ENCODE measurements at regions of chr9 and their contacts with region 1.

Region 1: DNA sequence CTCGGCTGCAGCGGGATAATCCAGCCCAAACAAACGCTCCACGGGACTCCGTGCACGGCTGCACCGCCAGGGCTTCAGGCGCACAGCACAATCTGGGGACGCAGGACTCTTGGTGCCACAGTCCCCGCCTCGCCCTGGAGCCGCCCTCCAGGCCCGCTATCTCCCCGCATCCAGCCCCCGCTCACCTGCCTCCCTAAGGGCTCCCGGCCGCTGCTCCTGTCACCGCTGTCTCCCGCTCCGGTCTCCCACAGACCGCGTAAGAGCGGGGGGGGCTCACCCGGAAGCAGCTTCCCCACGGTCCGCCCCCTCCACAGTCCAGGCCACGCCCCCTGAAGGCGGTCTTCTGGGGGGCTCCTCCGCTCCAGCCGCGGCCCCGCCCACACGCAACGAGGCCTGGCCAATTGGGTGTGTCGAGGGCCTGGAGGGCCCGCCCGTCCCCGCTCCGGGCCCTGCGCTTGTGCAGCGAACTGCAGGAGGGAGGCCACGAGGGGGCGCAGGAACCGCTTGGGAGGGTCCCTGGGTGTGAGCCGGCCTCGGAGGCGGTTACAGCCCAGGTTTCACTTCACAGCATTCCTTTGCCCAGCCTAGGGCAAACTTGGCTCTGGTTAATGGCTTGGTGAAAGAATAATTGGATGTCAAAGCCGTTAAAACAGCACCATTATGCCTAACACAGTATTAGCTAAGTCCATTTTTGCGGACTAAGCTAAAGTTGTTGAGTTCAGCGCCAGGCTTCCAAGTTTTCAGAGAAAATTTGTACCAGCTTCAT is at the start of gene ALAD:
- DNase-seq: peak; percentile 99 to 100 (median 100)
- ATAC-seq: peak; percentile 95 to 99 (median 97)
- H3K4me3 ChIP-seq: peak within 1 kb of the TSS; percentile 59 to 79 (median 76)
- H3K27ac ChIP-seq: peak within 1 kb of the TSS; percentile 58 to 78 (median 64)
- H3K4me1 ChIP-seq: peaks cover 26 to 34% (median 33%) of the 10 kb centered on the region in 3 donors
- H3K27me3 ChIP-seq: no peaks in the 10 kb centered on the region
- CTCF ChIP-seq: peak; percentile 93 to 97 (median 96)
- total RNA-seq, gene ALAD: 35.7 to 60.3 (median 43.8) TPM

Region 2: GRCh38 chr9:113309204-113309813 is 91.9 kb before region 1 on chr9:
- intact Hi-C with region 1: loop called in 2 of 3 experiments (anchors 5 to 10 kb)
- DNase-seq: peak in 2 of 6 donors; percentile 27 to 38
- ATAC-seq: peak in 3 of 4 donors; percentile 82 to 88 (median 86)
- H3K4me3 ChIP-seq: no peak overlapping the region
- H3K27ac ChIP-seq: no peak overlapping the region
- H3K4me1 ChIP-seq: no peaks in the 10 kb centered on the region
- H3K27me3 ChIP-seq: no peaks in the 10 kb centered on the region
- CTCF ChIP-seq: peak in 3 of 4 donors; percentile 35 to 42 (median 40)

Region 3: GRCh38 chr9:113340017-113340699 is 61.1 kb before region 1 on chr9 and contains the start of gene WDR31:
- intact Hi-C with region 1: loop called in 2 of 3 experiments (anchors 10 kb)
- DNase-seq: peak; percentile 82 to 95 (median 88)
- ATAC-seq: peak; percentile 95 to 99 (median 98)
- H3K4me3 ChIP-seq: peak within 1 kb of the TSS; percentile 60 to 83 (median 66)
- H3K27ac ChIP-seq: peak within 1 kb of the TSS; percentile 62 to 81 (median 65)
- H3K4me1 ChIP-seq: peaks cover 3 to 8% (median 8%) of the 10 kb centered on the region in 3 donors
- H3K27me3 ChIP-seq: no peaks in the 10 kb centered on the region
- CTCF ChIP-seq: no peak
- total RNA-seq, gene WDR31: 2.2 to 4.5 (median 3.3) TPM

Region 4: GRCh38 chr9:113943112-113944009 is 542.2 kb after region 1 on chr9:
- intact Hi-C with region 1: no loop called
- DNase-seq: no peak
- ATAC-seq: peak in 1 of 4 donors; percentile 34
- H3K4me3 ChIP-seq: no peak overlapping the region
- H3K27ac ChIP-seq: no peak overlapping the region
- H3K4me1 ChIP-seq: no peaks in the 10 kb centered on the region
- H3K27me3 ChIP-seq: no peaks in the 10 kb centered on the region
- CTCF ChIP-seq: no peak

Measured in pancreas (tissue), 10 donors.